Activated CD8-positive, alpha-beta T cell treated with anti-CD3 and anti-CD28 coated beads for 36 hours (primary cell): ENCODE measurements at regions of chr11 and their contacts with region 1.

Region 1: DNA sequence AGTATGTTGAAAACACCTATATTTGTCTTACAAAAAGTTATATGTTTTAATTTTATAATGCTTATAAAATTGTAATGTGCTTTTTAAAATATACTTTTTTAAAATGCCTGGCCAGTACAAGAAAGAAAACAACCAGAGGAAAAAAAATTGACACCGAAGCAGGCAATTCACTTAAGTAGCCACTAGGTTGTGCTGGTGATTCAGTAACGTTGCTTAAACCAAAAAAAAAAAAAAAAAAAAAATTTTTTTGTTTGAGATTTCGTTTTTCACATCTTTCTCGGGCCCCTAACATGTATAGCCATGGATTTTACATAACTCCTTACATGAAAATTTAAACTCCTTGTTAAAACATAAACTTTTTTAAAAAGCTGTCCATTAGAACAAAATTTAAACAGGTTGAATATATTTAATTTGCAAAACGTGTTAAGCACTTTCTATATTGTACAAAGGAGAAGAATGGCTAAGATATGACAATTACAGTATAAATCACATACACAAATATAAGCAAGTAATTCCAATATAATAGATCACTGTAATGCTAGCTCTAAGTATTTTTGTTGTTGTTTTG is 9.2 kb downstream of the OR8B4 start:
- DNase-seq: no peak
- ATAC-seq: no peak
- H3K4me3 Mint-ChIP-seq: no peak overlapping the region
- H3K27ac Mint-ChIP-seq: no peak overlapping the region
- H3K4me1 Mint-ChIP-seq: no peaks in the 10 kb centered on the region
- H3K27me3 Mint-ChIP-seq: peaks cover 8% of the 10 kb centered on the region
- CTCF ChIP-seq: peak; percentile 82

Region 2: GRCh38 chr11:124194698-124195410 is 220.6 kb before region 1 on chr11:
- CTCF ChIA-PET with region 1: no interaction called
- POLR2A ChIA-PET with region 1: no interaction called
- intact Hi-C with region 1: no loop called
- DNase-seq: peak; percentile 70
- ATAC-seq: peak; percentile 87
- H3K4me3 Mint-ChIP-seq: no peak overlapping the region
- H3K27ac Mint-ChIP-seq: no peak overlapping the region
- H3K4me1 Mint-ChIP-seq: no peaks in the 10 kb centered on the region
- H3K27me3 Mint-ChIP-seq: peaks cover 6% of the 10 kb centered on the region
- CTCF ChIP-seq: peak; percentile 75

Region 3: GRCh38 chr11:124380585-124380984 is 34.9 kb before region 1 on chr11:
- CTCF ChIA-PET with region 1: no interaction called
- POLR2A ChIA-PET with region 1: no interaction called
- intact Hi-C with region 1: no loop called
- DNase-seq: no peak
- ATAC-seq: no peak
- H3K4me3 Mint-ChIP-seq: no peak overlapping the region
- H3K27ac Mint-ChIP-seq: no peak overlapping the region
- H3K4me1 Mint-ChIP-seq: no peaks in the 10 kb centered on the region
- H3K27me3 Mint-ChIP-seq: no peaks in the 10 kb centered on the region
- CTCF ChIP-seq: no peak

Region 4: DNA sequence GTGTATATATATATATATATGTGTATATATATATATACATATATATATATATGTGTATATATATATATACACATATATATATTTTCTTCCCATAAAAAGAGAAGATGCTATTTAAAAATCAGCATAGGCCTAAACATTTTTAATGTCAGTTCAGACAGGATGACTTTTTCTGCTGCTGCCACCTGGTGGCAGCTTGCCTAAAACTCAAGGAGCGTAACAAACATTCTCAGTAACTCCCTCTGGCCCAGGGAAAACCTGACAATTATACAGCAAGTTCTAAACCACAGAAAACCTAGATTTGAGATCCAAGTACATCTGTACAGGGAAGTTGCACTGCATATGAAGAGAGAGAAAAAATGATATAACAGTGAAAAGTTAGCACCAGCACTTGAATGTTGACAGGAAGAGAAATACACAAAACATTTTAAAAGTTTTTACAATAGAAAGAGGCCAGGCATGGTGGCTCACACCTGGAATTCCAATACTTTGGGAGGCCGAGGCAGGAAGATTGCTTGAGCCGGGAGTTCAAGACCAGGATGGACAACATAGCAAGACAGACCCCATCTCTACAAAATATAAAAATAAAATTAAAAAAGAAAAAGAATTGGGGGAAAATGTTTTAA is 170.9 kb after region 1 on chr11:
- CTCF ChIA-PET with region 1: interaction called, 16 read pairs
- POLR2A ChIA-PET with region 1: no interaction called
- intact Hi-C with region 1: loop called (anchors 2 kb)
- DNase-seq: peak; percentile 68
- ATAC-seq: no peak
- H3K4me3 Mint-ChIP-seq: no peak overlapping the region
- H3K27ac Mint-ChIP-seq: no peak overlapping the region
- H3K4me1 Mint-ChIP-seq: no peaks in the 10 kb centered on the region
- H3K27me3 Mint-ChIP-seq: peaks cover 14% of the 10 kb centered on the region
- CTCF ChIP-seq: peak; percentile 76